ENCODE measurements at regions of chr3 and their contacts with region 1.

Region 1: GRCh38 chr3:160399125-160400029 is at the starts of genes IFT80 and SMC4:
- DNase-seq: peak; percentile 98
- H3K4me3 Mint-ChIP-seq: peak within 1 kb of the TSS; percentile 91
- H3K27ac Mint-ChIP-seq: peak within 1 kb of the TSS; percentile 97
- H3K4me1 Mint-ChIP-seq: peaks cover 39% of the 10 kb centered on the region
- H3K27me3 Mint-ChIP-seq: peaks cover 7% of the 10 kb centered on the region
- total RNA-seq, gene IFT80: 9.3 to 9.9 TPM
- total RNA-seq, gene SMC4: 187 to 191 TPM

Region 2: GRCh38 chr3:158801696-158802408 is 1597.5 kb before region 1 on chr3 and contains the start of gene MFSD1:
- CTCF ChIA-PET with region 1: no interaction called
- intact Hi-C with region 1: loop called (anchors 5 kb)
- DNase-seq: peak; percentile 92
- H3K4me3 Mint-ChIP-seq: peak within 1 kb of the TSS; percentile 84
- H3K27ac Mint-ChIP-seq: peak within 1 kb of the TSS; percentile 44
- H3K4me1 Mint-ChIP-seq: peaks cover 21% of the 10 kb centered on the region
- H3K27me3 Mint-ChIP-seq: no peaks in the 10 kb centered on the region
- total RNA-seq, gene MFSD1: 4.8 to 5.7 TPM

Region 3: DNA sequence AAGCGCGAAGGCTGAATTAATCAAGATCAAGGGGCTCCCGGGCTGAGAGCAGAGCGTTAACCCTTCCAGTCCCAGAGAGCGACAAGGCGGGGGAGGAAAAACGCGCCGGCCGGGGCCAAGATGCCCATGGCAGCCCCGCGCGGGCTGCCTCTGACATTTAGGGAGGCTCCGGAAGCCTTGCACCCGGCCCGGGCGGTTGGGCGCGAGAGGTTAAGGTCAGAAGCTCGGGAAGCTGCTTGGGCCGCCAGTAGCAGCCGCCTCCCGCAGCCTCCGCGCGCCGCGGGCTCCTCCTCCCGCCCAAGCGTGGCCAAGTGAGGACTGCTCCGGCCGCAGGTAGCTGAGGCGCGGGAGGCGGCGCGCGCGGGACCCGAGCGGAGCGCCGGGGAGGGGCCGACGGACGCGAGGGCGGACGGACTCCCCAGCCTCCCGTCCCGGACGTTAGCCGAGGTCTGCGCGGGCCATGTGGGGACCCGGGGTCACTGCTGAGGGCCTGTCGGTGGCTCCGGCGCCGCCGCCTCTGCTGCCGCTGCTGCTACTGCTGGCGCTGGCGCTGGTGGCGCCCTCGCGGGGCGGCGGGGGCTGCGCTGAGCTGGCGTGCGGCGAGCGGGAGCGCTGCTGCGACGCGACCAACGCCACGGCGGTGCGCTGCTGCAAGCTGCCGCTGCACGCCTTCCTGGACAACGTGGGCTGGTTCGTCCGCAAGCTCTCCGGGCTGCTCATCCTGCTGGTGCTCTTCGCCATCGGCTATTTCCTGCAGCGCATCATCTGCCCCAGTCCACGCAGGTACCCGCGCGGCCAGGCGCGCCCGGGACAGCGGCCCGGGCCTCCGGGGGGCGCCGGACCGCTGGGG is 174.0 kb before region 1 on chr3 and contains the start of gene C3orf80:
- CTCF ChIA-PET with region 1: no interaction called
- intact Hi-C with region 1: loop called (anchors 5 kb)
- DNase-seq: peak; percentile 57
- H3K4me3 Mint-ChIP-seq: peak within 1 kb of the TSS; percentile 66
- H3K27ac Mint-ChIP-seq: no peak within 1 kb of the TSS
- H3K4me1 Mint-ChIP-seq: peaks cover 9% of the 10 kb centered on the region
- H3K27me3 Mint-ChIP-seq: peaks cover 49% of the 10 kb centered on the region
- total RNA-seq, gene C3orf80: not detected

Region 4: DNA sequence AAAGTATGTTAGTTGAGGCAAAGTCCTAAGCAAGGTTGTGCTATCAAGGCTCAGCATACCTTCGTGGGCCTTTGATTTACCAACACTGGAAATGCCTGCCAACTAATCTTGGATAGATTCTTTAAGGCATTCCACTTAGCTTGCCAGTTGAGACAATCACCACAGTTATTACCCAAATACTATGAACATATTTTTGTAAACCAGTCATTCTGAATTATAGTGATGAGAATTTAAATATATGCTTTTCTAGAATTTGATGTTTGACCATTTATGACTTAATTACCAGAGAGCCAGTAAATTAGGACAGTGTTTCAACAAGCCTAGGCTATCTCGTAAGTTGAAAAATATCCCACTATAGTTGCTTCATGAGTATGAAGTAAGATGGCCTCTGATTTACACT is 34.7 kb after region 1 on chr3:
- CTCF ChIA-PET with region 1: no interaction called
- intact Hi-C with region 1: loop called (anchors 2 kb)
- DNase-seq: no peak
- H3K4me3 Mint-ChIP-seq: no peak overlapping the region
- H3K27ac Mint-ChIP-seq: no peak overlapping the region
- H3K4me1 Mint-ChIP-seq: peaks cover 16% of the 10 kb centered on the region
- H3K27me3 Mint-ChIP-seq: no peaks in the 10 kb centered on the region

Region 5: GRCh38 chr3:160464321-160464720 is 64.9 kb after region 1 on chr3:
- CTCF ChIA-PET with region 1: no interaction called
- intact Hi-C with region 1: no loop called
- DNase-seq: no peak
- H3K4me3 Mint-ChIP-seq: no peak overlapping the region
- H3K27ac Mint-ChIP-seq: no peak overlapping the region
- H3K4me1 Mint-ChIP-seq: no peaks in the 10 kb centered on the region
- H3K27me3 Mint-ChIP-seq: peaks cover 4% of the 10 kb centered on the region

Region 6: DNA sequence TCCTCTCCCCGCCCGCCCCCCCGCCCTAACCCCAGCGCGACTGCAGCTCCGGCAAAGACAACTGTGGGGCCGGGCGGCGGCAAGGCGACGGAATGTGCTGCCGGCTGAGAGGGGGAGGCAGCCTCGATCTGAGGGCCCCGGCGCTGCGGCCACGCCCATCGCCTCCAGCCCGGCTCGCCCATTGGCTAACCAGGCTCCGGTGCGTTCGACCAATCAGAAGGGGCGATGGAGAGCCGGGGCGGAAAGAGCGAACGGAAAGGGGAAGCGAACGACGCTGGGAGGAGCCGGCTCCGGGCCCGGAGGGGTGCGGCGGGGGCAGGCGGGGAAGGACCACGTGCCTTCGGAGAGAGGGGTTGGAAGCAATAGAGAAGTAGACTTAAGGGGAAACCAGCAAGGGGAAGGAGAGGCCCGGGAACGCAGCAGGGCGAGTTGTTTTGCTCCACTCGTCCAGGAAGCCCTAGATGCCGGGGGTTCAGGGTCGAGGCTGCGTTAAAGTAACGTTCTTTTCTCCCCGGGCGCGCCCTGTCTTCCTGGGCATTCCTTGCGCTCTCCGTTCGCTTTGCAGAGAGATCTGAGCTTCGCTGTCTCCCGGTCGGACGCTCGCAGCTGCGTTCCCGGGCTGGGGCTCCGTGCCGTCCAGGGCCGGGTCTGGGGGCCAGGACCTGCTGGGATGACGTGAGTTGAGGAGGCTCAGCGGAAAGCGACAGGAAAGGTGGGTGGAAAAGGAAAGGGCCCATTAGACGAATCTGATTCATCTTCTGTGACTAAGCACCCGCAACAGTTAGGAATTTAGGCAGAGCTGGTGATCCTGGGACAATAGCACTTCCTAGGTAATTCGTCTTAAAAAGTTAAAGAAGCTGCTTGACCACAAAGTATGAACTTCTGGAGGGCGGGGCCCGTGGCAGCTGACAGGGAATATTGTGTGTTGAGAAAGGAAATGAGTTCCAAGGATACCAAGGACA is 166.3 kb after region 1 on chr3 and contains the start of gene KPNA4:
- CTCF ChIA-PET with region 1: no interaction called
- intact Hi-C with region 1: loop called (anchors 1 kb)
- DNase-seq: peak; percentile 97
- H3K4me3 Mint-ChIP-seq: peak within 1 kb of the TSS; percentile 93
- H3K27ac Mint-ChIP-seq: peak within 1 kb of the TSS; percentile 97
- H3K4me1 Mint-ChIP-seq: peaks cover 40% of the 10 kb centered on the region
- H3K27me3 Mint-ChIP-seq: no peaks in the 10 kb centered on the region
- total RNA-seq, gene KPNA4: 43.2 to 59.4 TPM

Region 7: GRCh38 chr3:161220850-161221753 is 821.7 kb after region 1 on chr3 and contains the start of gene NMD3:
- CTCF ChIA-PET with region 1: no interaction called
- intact Hi-C with region 1: loop called (anchors 1 kb)
- DNase-seq: peak; percentile 97
- H3K4me3 Mint-ChIP-seq: peak within 1 kb of the TSS; percentile 87
- H3K27ac Mint-ChIP-seq: peak within 1 kb of the TSS; percentile 88
- H3K4me1 Mint-ChIP-seq: peaks cover 28% of the 10 kb centered on the region
- H3K27me3 Mint-ChIP-seq: peaks cover 2% of the 10 kb centered on the region
- total RNA-seq, gene NMD3: 58.1 to 59.4 TPM

Measured in activated naive CD4-positive, alpha-beta T cell treated with anti-CD3 and anti-CD28 coated beads for 36 hours (primary cell).